Endothelial cell of umbilical vein (primary cell): ENCODE measurements at regions of chr17 and their contacts with region 1.

Region 1: GRCh38 chr17:19346351-19347255 is 15.9 kb downstream of the B9D1 start:
- DNase-seq: peak; percentile 33
- H3K4me3 ChIP-seq: no peak overlapping the region
- H3K27ac ChIP-seq: no peak overlapping the region
- H3K4me1 ChIP-seq: peaks cover 8% of the 10 kb centered on the region
- H3K27me3 ChIP-seq: no peaks in the 10 kb centered on the region
- CTCF ChIP-seq: no peak
- POLR2A ChIP-seq: no peak

Region 2: DNA sequence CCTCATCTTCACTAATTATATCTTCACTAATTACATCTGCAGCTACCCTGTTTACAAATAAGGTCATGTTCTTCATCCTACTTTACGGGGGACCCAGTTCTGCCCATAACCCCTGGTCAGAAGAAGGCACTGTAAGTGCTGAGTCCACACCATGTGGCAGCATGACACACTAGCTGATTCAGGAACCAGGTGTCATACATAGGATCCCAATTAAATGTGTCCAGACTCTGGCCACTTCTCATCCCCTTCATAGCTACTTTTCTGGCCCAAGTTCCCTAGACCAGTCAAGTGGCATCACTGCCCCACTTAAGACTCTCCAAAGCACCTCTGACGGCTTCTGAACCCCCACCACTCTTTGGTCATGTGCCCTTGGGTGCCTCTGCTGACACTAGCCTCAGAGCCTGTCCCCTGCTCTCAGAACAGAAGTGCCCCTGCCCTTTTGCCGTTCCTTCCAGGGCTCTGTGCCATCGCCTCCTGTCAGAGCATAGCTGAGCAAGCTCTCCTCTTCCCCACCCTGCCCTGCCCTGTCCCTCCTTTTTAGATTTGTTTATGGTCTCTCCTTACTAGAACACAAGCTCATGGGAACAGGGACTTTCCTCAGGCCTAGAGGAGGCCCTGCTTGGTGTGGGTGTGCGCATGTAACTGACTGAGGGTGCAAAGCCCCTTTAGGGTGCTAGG is 45.2 kb before region 1 on chr17:
- CTCF ChIA-PET with region 1: no interaction called
- POLR2A ChIA-PET with region 1: no interaction called
- dilution Hi-C with region 1: no loop called
- intact Hi-C with region 1: no loop called
- DNase-seq: no peak
- H3K4me3 ChIP-seq: no peak overlapping the region
- H3K27ac ChIP-seq: no peak overlapping the region
- H3K4me1 ChIP-seq: peaks cover 23% of the 10 kb centered on the region
- H3K27me3 ChIP-seq: no peaks in the 10 kb centered on the region
- CTCF ChIP-seq: no peak
- POLR2A ChIP-seq: no peak

Region 3: GRCh38 chr17:19311421-19312215 is 35.0 kb before region 1 on chr17:
- CTCF ChIA-PET with region 1: no interaction called
- POLR2A ChIA-PET with region 1: no interaction called
- dilution Hi-C with region 1: no loop called
- intact Hi-C with region 1: loop called (anchors 5 kb)
- DNase-seq: peak; percentile 79
- H3K4me3 ChIP-seq: peak overlapping the region in 1 of 3 experiments; percentile 2
- H3K27ac ChIP-seq: peak overlapping the region; percentile 98
- H3K4me1 ChIP-seq: peaks cover 22% of the 10 kb centered on the region
- H3K27me3 ChIP-seq: no peaks in the 10 kb centered on the region
- CTCF ChIP-seq: no peak
- POLR2A ChIP-seq: no peak

Region 4: GRCh38 chr17:19327039-19327776 is 19.4 kb before region 1 on chr17:
- CTCF ChIA-PET with region 1: no interaction called
- POLR2A ChIA-PET with region 1: interaction called, 12 read pairs
- dilution Hi-C with region 1: no loop called
- intact Hi-C with region 1: no loop called
- DNase-seq: no peak
- H3K4me3 ChIP-seq: no peak overlapping the region
- H3K27ac ChIP-seq: no peak overlapping the region
- H3K4me1 ChIP-seq: no peaks in the 10 kb centered on the region
- H3K27me3 ChIP-seq: no peaks in the 10 kb centered on the region
- CTCF ChIP-seq: no peak
- POLR2A ChIP-seq: no peak

Region 5: DNA sequence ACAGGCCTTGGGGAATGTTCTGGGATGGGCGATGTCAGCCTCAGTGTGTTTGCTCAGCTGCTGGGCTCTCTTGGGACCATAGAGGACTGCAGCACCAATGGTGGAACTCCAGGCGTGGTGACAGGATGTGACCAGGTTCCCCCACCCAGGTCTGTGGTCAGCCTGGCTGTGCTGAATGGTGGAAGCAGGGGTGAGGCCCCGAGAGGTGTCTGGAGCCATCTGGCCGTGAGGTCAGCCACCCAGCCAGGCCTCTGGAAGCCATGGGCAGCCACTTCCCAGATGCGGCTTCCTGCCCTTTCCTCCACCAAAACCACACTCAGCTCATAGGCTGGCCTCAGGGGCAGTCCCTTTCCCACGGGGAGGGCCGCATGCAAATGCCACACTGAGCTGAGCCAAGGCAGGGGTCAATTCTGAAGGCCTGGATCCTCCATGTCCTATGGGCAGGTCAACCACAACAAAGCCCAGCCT is 23.9 kb after region 1 on chr17:
- CTCF ChIA-PET with region 1: no interaction called
- POLR2A ChIA-PET with region 1: no interaction called
- dilution Hi-C with region 1: no loop called
- intact Hi-C with region 1: no loop called
- DNase-seq: no peak
- H3K4me3 ChIP-seq: no peak overlapping the region
- H3K27ac ChIP-seq: no peak overlapping the region
- H3K4me1 ChIP-seq: no peaks in the 10 kb centered on the region
- H3K27me3 ChIP-seq: no peaks in the 10 kb centered on the region
- CTCF ChIP-seq: no peak
- POLR2A ChIP-seq: no peak

Region 6: DNA sequence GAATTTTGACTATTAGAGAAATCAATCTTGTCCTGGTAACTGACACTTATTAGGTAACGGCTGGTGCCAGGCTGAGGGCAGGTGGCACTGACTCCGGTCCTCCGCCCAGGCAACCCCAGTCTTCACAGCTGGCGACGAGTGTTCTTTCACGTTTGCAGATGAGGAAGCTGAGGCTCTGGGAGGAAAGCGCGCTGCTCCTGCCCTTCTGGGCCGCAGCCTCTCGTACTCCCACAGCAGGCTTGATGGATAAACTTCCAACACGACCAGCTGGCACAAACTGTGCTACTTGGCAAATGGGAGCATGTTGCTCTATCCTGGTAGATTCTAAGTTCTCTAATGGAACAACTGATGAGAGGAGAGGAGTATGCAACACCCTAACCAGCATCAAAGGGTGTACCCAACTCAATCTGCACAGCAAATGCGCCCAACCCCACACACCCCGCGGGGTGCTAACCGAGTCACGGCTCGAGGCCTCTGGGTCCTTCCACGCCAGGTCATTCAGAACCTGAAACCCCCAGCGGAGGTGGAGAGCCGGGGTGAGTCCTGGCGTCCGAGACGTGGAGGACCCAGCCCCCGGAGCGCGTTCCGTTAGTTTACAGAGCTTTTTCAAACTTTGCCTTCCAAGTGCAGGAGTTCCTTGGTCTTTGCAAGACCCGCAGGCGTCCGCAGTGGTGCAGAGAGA is 186.6 kb after region 1 on chr17:
- CTCF ChIA-PET with region 1: no interaction called
- POLR2A ChIA-PET with region 1: no interaction called
- dilution Hi-C with region 1: no loop called
- intact Hi-C with region 1: no loop called
- DNase-seq: peak; percentile 12
- H3K4me3 ChIP-seq: peak overlapping the region; percentile 36 to 88 (median 58)
- H3K27ac ChIP-seq: no peak overlapping the region
- H3K4me1 ChIP-seq: peaks cover 8% of the 10 kb centered on the region
- H3K27me3 ChIP-seq: no peaks in the 10 kb centered on the region
- CTCF ChIP-seq: no peak
- POLR2A ChIP-seq: no peak